MCF 10A (cell line): ENCODE measurements at regions of chr20 and their contacts with region 1.

Region 1: DNA sequence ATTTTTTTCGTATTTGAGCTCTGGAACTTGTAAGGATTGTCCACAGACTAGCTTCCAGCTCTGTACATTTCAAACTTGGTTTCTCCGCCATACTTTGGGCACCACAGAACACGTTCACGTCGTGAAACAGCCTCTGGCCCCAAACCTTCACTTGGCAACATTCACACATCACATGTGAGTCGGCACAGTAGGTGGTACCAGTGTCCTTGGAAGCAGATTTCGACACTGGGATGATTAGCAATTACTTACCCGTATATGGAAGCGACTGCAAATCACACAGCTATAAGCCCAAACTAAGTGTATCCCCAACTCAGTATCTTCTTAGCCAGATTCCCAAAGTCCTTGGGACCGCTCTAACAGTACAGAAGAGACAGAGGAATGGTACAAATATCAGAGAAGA is 60.2 kb downstream of the MAFB start:
- DNase-seq: peak; percentile 84
- H3K4me3 Mint-ChIP-seq: no peak overlapping the region
- H3K27ac Mint-ChIP-seq: peak overlapping the region; percentile 80
- H3K4me1 Mint-ChIP-seq: peaks cover 54% of the 10 kb centered on the region
- H3K27me3 Mint-ChIP-seq: no peaks in the 10 kb centered on the region
- CTCF ChIP-seq: no peak

Region 2: DNA sequence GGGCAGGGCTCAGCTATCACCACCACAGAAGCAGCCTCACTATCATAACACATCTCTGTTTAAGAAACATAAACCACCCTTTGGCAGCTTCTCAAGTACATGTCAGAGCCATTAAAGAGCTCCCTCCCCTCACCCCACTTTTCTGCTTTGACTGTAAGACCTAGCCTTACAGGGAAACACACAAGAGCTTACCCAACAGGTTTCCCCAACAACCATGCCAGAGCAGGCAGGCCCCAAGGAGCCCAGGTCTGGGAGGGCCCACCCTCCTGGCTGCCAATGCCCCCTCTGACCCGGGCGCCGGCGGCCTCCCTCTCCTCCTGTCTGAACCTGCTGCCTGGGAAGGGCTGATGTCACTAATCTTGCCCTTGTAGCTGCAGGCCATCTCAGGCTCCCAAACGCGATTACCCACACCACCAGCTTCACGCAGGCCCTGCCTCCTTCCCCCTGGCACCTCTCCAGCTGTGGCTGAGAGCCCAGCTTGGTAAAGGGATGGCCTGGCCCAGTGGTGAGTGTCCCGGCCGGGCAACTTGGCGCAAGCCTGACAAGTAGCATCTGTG is 341.8 kb before region 1 on chr20:
- CTCF ChIA-PET with region 1: interaction called, 4 read pairs
- POLR2A ChIA-PET with region 1: interaction called, 12 read pairs
- intact Hi-C with region 1: no loop called
- DNase-seq: peak; percentile 98
- H3K4me3 Mint-ChIP-seq: peak overlapping the region; percentile 40
- H3K27ac Mint-ChIP-seq: peak overlapping the region; percentile 92
- H3K4me1 Mint-ChIP-seq: peaks cover 36% of the 10 kb centered on the region
- H3K27me3 Mint-ChIP-seq: no peaks in the 10 kb centered on the region
- CTCF ChIP-seq: no peak

Region 3: DNA sequence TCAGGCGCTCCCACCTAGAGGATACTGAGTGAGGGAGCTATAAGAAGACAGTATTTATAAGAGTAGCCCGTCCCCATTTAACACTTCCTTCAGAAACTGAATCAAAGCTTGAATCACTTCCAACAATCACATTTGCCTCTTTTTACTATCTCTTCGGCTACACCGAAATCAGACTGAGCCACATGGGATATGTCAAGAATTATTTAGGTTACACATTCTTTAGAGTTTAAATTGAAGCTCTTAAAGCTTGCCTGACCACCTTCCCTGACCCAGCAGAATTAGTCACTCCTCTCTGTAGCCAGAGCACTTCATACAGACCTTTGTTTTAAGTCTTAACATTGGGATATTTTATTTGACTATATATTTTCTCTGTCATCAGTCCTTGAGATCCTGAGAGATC is 103.5 kb before region 1 on chr20:
- CTCF ChIA-PET with region 1: no interaction called
- POLR2A ChIA-PET with region 1: no interaction called
- intact Hi-C with region 1: no loop called
- DNase-seq: peak; percentile 55
- H3K4me3 Mint-ChIP-seq: no peak overlapping the region
- H3K27ac Mint-ChIP-seq: peak overlapping the region; percentile 0
- H3K4me1 Mint-ChIP-seq: peaks cover 11% of the 10 kb centered on the region
- H3K27me3 Mint-ChIP-seq: no peaks in the 10 kb centered on the region
- CTCF ChIP-seq: no peak

Region 4: DNA sequence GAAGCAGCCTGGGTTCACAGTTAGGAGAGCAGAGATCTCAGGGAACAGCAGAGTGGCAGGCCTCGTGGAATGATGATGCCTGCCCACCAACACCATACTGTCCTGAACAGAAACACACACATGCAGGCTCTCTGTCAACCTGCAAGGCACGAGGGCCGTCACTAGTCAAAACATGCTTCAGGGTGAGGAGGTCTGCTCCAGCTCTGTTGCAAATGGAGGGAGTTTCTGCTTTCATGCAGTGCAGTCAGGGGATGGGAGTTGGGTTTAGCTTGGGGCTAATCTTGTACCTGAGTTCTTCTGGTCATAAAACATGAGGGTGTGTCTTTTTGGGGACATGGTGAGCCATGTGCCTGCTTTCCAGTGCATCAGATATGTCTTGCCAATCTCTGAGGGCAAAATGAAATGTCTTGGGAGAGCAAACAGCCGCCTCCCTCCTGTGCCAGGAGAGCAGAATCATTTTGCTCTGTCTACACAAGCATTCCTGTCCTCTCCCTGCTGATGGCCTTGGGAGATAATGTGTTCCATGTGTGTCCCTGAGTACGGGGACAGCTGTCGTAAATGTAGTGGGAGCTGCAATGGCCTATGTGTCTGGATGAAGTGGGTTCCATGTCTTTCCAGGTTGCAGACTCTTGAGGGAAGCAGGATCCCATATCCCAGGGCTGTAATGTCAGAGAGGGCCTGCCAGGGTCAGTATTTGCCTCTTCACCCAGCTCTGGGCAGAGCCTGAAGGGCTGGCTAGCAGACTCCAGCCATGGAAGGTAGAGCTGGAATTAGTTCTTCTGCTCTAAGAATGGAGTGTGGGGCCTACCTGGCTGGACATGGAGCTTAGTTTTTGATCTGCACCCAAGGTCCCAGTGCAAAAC is 19.6 kb after region 1 on chr20:
- CTCF ChIA-PET with region 1: interaction called, 6 read pairs
- POLR2A ChIA-PET with region 1: interaction called, 57 read pairs
- intact Hi-C with region 1: no loop called
- DNase-seq: no peak
- H3K4me3 Mint-ChIP-seq: no peak overlapping the region
- H3K27ac Mint-ChIP-seq: peak overlapping the region; percentile 80
- H3K4me1 Mint-ChIP-seq: peaks cover 43% of the 10 kb centered on the region
- H3K27me3 Mint-ChIP-seq: no peaks in the 10 kb centered on the region
- CTCF ChIP-seq: no peak

Region 5: DNA sequence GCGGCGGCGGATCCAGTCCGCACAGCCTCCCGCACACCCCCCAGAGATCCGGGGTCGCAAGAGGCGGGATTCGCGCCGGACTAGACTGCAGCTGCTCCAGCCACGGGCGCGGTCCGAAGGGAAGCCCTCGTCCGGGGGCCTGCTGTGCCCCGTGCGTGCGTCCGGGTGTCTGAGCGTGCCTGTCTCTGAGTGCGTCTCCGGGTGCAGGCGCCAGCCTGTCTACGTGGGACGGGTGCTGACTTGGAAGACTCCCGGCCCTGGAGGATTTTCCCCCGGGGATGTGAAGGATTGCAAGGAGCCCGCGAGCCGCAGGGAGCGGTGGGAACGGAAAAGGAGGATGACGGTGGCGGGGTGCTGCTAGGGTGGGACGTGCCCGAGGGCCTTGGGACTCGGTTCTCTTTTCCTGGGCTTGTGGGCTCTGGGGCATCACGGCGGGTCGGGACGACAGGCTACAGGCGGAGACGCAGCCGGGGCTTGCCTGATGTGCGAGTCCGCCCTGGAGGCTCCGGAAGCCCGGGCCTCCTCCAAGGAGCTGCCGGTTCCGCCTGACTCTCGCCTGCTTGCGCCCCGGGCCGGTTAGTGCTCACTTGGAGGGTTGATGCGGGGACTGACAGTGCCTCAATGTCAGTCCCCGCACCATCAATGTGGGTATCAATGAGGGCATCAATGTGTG is 54.5 kb after region 1 on chr20:
- CTCF ChIA-PET with region 1: interaction called, 22 read pairs
- POLR2A ChIA-PET with region 1: interaction called, 62 read pairs
- intact Hi-C with region 1: no loop called
- DNase-seq: no peak
- H3K4me3 Mint-ChIP-seq: no peak overlapping the region
- H3K27ac Mint-ChIP-seq: no peak overlapping the region
- H3K4me1 Mint-ChIP-seq: peaks cover 17% of the 10 kb centered on the region
- H3K27me3 Mint-ChIP-seq: no peaks in the 10 kb centered on the region
- CTCF ChIP-seq: no peak

Region 6: GRCh38 chr20:40835321-40835720 is 206.4 kb after region 1 on chr20:
- CTCF ChIA-PET with region 1: no interaction called
- POLR2A ChIA-PET with region 1: no interaction called
- intact Hi-C with region 1: no loop called
- DNase-seq: no peak
- H3K4me3 Mint-ChIP-seq: no peak overlapping the region
- H3K27ac Mint-ChIP-seq: no peak overlapping the region
- H3K4me1 Mint-ChIP-seq: no peaks in the 10 kb centered on the region
- H3K27me3 Mint-ChIP-seq: peaks cover 15% of the 10 kb centered on the region
- CTCF ChIP-seq: no peak

Region 7: DNA sequence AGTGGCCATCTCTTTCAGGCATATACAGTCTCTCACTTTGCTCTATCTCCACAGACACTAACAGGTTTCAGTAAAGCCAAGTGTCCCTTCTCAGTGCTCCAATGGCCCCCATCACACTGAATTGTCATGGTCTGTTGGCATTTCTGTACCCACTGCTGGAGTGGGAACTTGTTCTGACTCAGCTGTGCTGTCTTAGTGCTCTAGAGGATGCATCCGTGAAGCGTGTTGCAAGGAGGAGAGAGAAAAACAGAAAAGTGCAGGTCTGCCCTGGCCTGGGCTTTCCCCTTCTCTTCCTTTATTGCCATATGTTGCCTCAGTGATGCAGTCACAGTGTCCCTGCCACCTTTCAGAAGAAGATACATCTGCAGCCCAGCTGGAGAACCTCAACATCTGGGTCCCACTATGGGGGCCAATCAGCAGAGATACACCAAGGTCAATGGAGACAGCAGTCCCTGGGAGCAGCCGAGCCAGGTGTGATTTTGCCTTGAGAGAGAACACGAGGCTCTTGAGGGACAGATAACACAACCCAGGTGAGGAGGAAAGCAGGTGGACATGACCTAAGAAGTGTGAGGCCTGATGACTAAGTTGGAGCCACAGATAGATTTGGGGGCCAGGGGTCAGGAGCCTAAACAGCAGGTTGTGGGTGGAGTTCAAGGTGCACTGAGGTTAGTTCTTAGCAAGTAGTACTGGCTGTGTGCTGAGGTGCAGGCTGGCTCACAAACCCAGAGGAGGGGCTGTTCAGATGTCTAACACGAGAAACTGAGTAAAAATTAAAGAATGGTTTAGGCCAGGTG is 502.9 kb after region 1 on chr20:
- CTCF ChIA-PET with region 1: no interaction called
- POLR2A ChIA-PET with region 1: no interaction called
- intact Hi-C with region 1: no loop called
- DNase-seq: no peak
- H3K4me3 Mint-ChIP-seq: no peak overlapping the region
- H3K27ac Mint-ChIP-seq: peak overlapping the region; percentile 74
- H3K4me1 Mint-ChIP-seq: peaks cover 32% of the 10 kb centered on the region
- H3K27me3 Mint-ChIP-seq: no peaks in the 10 kb centered on the region
- CTCF ChIP-seq: no peak